H1 (cell line): ENCODE measurements at regions of chr5 and their contacts with region 1.

Region 1: DNA sequence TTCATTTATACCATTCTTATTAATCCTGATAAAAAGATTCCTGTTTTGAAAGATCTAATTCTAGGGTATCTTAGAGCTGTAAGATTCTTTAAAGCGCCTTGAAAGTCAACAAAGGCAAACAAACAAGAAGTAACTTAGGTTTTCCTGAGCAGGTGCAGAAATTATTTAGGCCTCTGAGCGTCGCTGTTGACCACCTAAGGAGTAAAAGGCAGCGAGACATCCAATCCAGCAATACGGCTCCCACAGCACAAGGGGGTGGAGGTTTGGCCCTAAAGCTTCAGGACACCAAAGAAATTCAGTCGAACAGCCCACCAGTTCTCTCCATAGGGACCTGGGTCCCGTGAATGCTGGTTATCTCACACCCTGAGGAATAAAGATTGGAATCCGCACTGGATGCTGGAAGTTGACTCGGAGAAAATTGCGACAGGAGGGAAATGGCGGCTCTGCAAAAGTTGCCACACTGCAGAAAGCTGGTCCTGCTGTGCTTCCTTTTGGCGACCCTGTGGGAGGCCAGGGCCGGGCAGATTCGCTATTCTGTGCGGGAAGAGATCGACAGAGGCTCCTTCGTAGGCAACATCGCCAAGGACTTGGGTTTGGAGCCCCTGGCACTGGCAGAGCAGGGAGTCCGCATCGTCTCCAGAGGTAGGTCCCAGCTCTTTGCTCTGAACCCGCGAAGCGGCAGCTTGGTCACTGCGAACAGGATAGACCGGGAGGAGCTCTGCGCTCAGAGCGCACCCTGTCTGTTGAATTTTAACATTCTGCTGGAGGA is at the start of gene PCDHGA2:
- DNase-seq: no peak
- H3K4me3 ChIP-seq: no peak within 1 kb of the TSS
- H3K27ac ChIP-seq: no peak within 1 kb of the TSS
- H3K4me1 ChIP-seq: no peaks in the 10 kb centered on the region
- H3K27me3 ChIP-seq: no peaks in the 10 kb centered on the region
- CTCF ChIP-seq: peak; percentile 10 to 77 (median 60)
- EP300 ChIP-seq: no peak
- POLR2A ChIP-seq: no peak
- RAD21 ChIP-seq: peak; percentile 58 to 65
- total RNA-seq, gene PCDHGA2: 0.31 and 0.32 TPM in 2 replicates

Region 2: GRCh38 chr5:141234109-141234667 is 104.5 kb before region 1 on chr5:
- CTCF ChIA-PET with region 1: interaction called, 12 read pairs
- POLR2A ChIA-PET with region 1: no interaction called
- DNase-seq: no peak
- H3K4me3 ChIP-seq: no peak overlapping the region
- H3K27ac ChIP-seq: no peak overlapping the region
- H3K4me1 ChIP-seq: no peaks in the 10 kb centered on the region
- H3K27me3 ChIP-seq: no peaks in the 10 kb centered on the region
- CTCF ChIP-seq: no peak
- EP300 ChIP-seq: no peak
- POLR2A ChIP-seq: no peak
- RAD21 ChIP-seq: peak; percentile 37 to 59

Region 3: GRCh38 chr5:141320225-141321169 is 18.2 kb before region 1 on chr5 and contains the start of gene TAF7:
- CTCF ChIA-PET with region 1: interaction called, 26 read pairs
- POLR2A ChIA-PET with region 1: interaction called, 15 read pairs
- DNase-seq: peak; percentile 77 to 95
- H3K4me3 ChIP-seq: peak within 1 kb of the TSS; percentile 79 to 99 (median 92)
- H3K27ac ChIP-seq: peak within 1 kb of the TSS; percentile 95
- H3K4me1 ChIP-seq: no peaks in the 10 kb centered on the region
- H3K27me3 ChIP-seq: no peaks in the 10 kb centered on the region
- CTCF ChIP-seq: peak; percentile 77 to 93 (median 80)
- EP300 ChIP-seq: no peak
- POLR2A ChIP-seq: peak; percentile 95 to 98
- RAD21 ChIP-seq: peak; percentile 45 to 57
- total RNA-seq, gene TAF7: 99.4 and 101 TPM in 2 replicates

Region 4: GRCh38 chr5:141349917-141350619 is 11.3 kb after region 1 on chr5 and contains the start of gene PCDHGB1:
- CTCF ChIA-PET with region 1: interaction called, 29 read pairs
- POLR2A ChIA-PET with region 1: interaction called, 3 read pairs
- DNase-seq: peak in 1 of 2 experiments; percentile 83
- H3K4me3 ChIP-seq: peak within 1 kb of the TSS; percentile 17 to 53 (median 31); a peak in 7 of 8 replicates
- H3K27ac ChIP-seq: no peak within 1 kb of the TSS
- H3K4me1 ChIP-seq: peaks cover 0 to 5% (median under 1%) of the 10 kb centered on the region in 4 experiments; a peak in 1 of 7 replicates
- H3K27me3 ChIP-seq: no peaks in the 10 kb centered on the region
- CTCF ChIP-seq: peak; percentile 69 to 86 (median 75)
- EP300 ChIP-seq: no peak
- POLR2A ChIP-seq: peak in 1 of 2 experiments; percentile 65; a peak in 1 of 3 replicates
- RAD21 ChIP-seq: peak; percentile 74 to 81
- total RNA-seq, gene PCDHGB1: 2.8 and 3.9 TPM in 2 replicates

Region 5: GRCh38 chr5:141369994-141370848 is 31.5 kb after region 1 on chr5 and contains the start of gene PCDHGB3:
- CTCF ChIA-PET with region 1: interaction called, 11 read pairs
- POLR2A ChIA-PET with region 1: no interaction called
- DNase-seq: no peak
- H3K4me3 ChIP-seq: no peak within 1 kb of the TSS
- H3K27ac ChIP-seq: no peak within 1 kb of the TSS
- H3K4me1 ChIP-seq: no peaks in the 10 kb centered on the region
- H3K27me3 ChIP-seq: no peaks in the 10 kb centered on the region
- CTCF ChIP-seq: peak; percentile 14 to 28 (median 24); a peak in 3 of 4 replicates
- EP300 ChIP-seq: no peak
- POLR2A ChIP-seq: no peak
- RAD21 ChIP-seq: peak; percentile 43 to 50; a peak in 3 of 4 replicates
- total RNA-seq, gene PCDHGB3: 1.3 and 1.6 TPM in 2 replicates

Region 6: DNA sequence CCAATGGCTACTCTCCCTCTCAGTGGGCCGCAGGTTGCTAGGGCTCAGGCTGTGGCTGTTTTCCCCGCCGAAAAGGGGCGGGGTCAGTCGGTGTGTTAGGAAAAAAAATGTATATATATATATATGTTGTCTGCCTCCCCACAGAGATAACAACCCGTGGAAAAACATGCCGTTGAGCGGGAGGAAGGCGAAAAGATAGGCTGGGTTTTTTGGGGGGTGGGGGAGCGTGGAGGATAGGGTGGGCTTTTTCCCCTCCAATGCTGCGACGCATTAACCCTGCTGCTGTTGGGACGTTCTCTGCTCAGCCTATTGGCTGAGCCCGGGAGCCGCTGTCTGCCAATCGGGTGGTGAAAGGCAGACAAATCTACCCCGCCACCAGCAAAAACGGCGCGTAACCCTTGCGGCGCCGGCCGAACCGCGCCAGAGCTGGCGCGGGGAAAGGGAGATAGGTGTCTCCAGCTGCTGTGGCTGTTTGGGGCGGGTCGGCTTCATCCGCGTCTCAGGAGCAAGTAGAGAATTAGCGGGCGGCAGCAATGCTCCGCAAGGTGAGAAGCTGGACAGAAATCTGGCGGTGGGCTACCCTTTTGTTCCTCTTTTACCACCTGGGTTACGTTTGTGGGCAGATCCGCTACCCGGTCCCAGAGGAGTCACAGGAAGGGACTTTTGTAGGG is 146.1 kb after region 1 on chr5 and contains the start of gene PCDHGC4:
- CTCF ChIA-PET with region 1: interaction called, 10 read pairs
- POLR2A ChIA-PET with region 1: no interaction called
- DNase-seq: peak in 1 of 2 experiments; percentile 84
- H3K4me3 ChIP-seq: peak within 1 kb of the TSS; percentile 56 to 78 (median 69)
- H3K27ac ChIP-seq: peak within 1 kb of the TSS; percentile 5; the same call in 1 of the 2 replicates
- H3K4me1 ChIP-seq: peaks cover 5 to 20% (median 12%) of the 10 kb centered on the region in 4 experiments
- H3K27me3 ChIP-seq: peaks cover 7 to 19% (median 16%) of the 10 kb centered on the region in 4 experiments
- CTCF ChIP-seq: peak in 1 of 3 experiments; percentile 5; a peak in 1 of 4 replicates
- EP300 ChIP-seq: no peak
- POLR2A ChIP-seq: peak in 1 of 2 experiments; percentile 57; a peak in 1 of 3 replicates
- RAD21 ChIP-seq: peak in 1 of 2 experiments; percentile 10; a peak in 1 of 4 replicates
- total RNA-seq, gene PCDHGC4: 2.4 and 2.6 TPM in 2 replicates

Region 7: DNA sequence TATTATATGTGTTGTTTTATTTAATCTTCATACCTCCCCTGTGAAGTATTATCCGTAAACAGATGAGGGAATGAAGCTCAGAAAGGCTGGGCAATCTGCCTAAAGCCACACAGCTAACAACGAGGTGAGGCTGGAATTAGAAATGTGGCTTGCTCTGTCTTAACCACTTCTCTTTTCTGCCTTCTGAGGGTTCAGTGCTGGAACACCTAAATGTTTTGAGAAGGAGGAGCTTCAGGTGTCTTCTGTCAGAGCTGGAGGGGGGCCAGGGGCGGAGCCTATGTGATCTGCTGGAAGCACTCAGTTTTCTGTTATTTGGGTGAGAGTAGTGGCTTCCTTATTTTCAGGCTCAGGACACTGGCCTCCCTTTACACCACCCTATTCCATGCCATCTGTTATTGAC is 378.3 kb after region 1 on chr5:
- CTCF ChIA-PET with region 1: no interaction called
- POLR2A ChIA-PET with region 1: no interaction called
- DNase-seq: no peak
- H3K4me3 ChIP-seq: no peak overlapping the region
- H3K27ac ChIP-seq: no peak overlapping the region
- H3K4me1 ChIP-seq: peaks cover 4 to 23% (median 12%) of the 10 kb centered on the region in 4 experiments
- H3K27me3 ChIP-seq: no peaks in the 10 kb centered on the region
- CTCF ChIP-seq: no peak
- EP300 ChIP-seq: no peak
- POLR2A ChIP-seq: no peak
- RAD21 ChIP-seq: no peak